ENCODE measurements at regions of chr14 and their contacts with region 1.

Region 1: GRCh38 chr14:71267007-71267513 is 359.8 kb downstream of the PCNX1 start:
- DNase-seq: no peak
- ATAC-seq: no peak
- H3K4me3 ChIP-seq: peak overlapping the region in 1 of 2 donors; percentile 25
- H3K4me3 Mint-ChIP-seq: peak overlapping the region; percentile 67 to 76 (median 70)
- H3K27ac ChIP-seq: no peak overlapping the region
- H3K27ac Mint-ChIP-seq: peak overlapping the region; percentile 24 to 77
- H3K4me1 ChIP-seq: peaks cover 0 to 3% of the 10 kb centered on the region in 2 experiments
- H3K4me1 Mint-ChIP-seq: peaks cover 10 to 19% (median 14%) of the 10 kb centered on the region in 3 donors
- H3K27me3 ChIP-seq: no peaks in the 10 kb centered on the region
- H3K27me3 Mint-ChIP-seq: peaks cover 0 to 1% of the 10 kb centered on the region in 2 donors

Region 2: GRCh38 chr14:71242237-71242748 is 24.8 kb before region 1 on chr14:
- CTCF ChIA-PET with region 1: no interaction called
- POLR2A ChIA-PET with region 1: no interaction called
- DNase-seq: no peak
- ATAC-seq: no peak
- H3K4me3 ChIP-seq: no peak overlapping the region
- H3K4me3 Mint-ChIP-seq: no peak overlapping the region
- H3K27ac ChIP-seq: no peak overlapping the region
- H3K27ac Mint-ChIP-seq: no peak overlapping the region
- H3K4me1 ChIP-seq: peaks cover 7 to 23% of the 10 kb centered on the region in 2 experiments
- H3K4me1 Mint-ChIP-seq: peaks cover 28 to 40% (median 30%) of the 10 kb centered on the region in 3 donors
- H3K27me3 ChIP-seq: no peaks in the 10 kb centered on the region
- H3K27me3 Mint-ChIP-seq: no peaks in the 10 kb centered on the region

Region 3: DNA sequence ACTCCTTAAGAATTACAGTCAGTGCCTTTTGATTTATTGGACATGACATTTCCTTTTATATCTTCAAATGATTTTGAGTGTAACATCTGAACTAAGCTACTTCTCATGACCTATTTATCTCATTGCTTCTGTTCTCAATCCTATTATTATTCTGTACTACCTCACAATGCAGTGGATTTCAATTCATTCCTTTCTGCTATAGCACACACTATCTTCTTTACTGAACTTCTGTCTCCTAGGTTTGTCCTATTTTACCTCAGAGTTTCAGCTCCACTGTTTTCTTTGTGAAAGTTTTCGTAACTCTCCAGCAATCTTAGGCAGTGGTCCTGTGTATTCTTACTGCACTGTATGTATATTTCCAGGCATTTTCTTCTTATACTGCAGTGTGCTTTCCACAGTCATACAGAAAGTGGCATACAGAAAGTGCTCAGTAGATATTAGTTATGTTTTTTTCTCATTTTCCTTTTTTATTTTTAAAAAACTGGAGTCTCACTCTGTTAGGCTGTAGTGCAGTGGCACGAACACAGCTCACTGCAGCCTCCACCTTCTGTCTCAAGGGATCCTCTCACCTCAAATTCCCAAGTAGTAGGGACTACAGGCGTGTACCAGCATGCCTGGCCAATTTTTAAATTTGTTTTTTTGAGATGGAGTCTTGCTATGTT is 296.6 kb after region 1 on chr14:
- CTCF ChIA-PET with region 1: no interaction called
- POLR2A ChIA-PET with region 1: no interaction called
- DNase-seq: no peak
- ATAC-seq: no peak
- H3K4me3 ChIP-seq: no peak overlapping the region
- H3K4me3 Mint-ChIP-seq: no peak overlapping the region
- H3K27ac ChIP-seq: no peak overlapping the region
- H3K27ac Mint-ChIP-seq: no peak overlapping the region
- H3K4me1 ChIP-seq: peaks cover 0 to 4% of the 10 kb centered on the region in 2 experiments
- H3K4me1 Mint-ChIP-seq: peaks cover 9 to 18% (median 12%) of the 10 kb centered on the region in 3 donors
- H3K27me3 ChIP-seq: no peaks in the 10 kb centered on the region
- H3K27me3 Mint-ChIP-seq: no peaks in the 10 kb centered on the region

Region 4: GRCh38 chr14:71764701-71765382 is 497.8 kb after region 1 on chr14:
- CTCF ChIA-PET with region 1: interaction called in 1 of 2 experiments, 10 read pairs
- POLR2A ChIA-PET with region 1: no interaction called
- DNase-seq: no peak
- ATAC-seq: no peak
- H3K4me3 ChIP-seq: no peak overlapping the region
- H3K4me3 Mint-ChIP-seq: no peak overlapping the region
- H3K27ac ChIP-seq: no peak overlapping the region
- H3K27ac Mint-ChIP-seq: no peak overlapping the region
- H3K4me1 ChIP-seq: no peaks in the 10 kb centered on the region
- H3K4me1 Mint-ChIP-seq: no peaks in the 10 kb centered on the region
- H3K27me3 ChIP-seq: peaks cover 0 to 12% of the 10 kb centered on the region in 2 experiments
- H3K27me3 Mint-ChIP-seq: peaks cover 15 to 26% of the 10 kb centered on the region in 2 donors

Measured in T-cell (primary cell).